Activated CD4-positive, alpha-beta memory T cell treated with anti-CD3 and anti-CD28 coated beads, Interleukin-2, amount 10 ng/mL, durations not matched to agents 7 days and 5 days (primary cell): ENCODE measurements at regions of chr1 and their contacts with region 1.

Region 1: GRCh38 chr1:89657886-89658285 is 25.0 kb downstream of the LRRC8C start:
- DNase-seq: no peak
- H3K4me3 Mint-ChIP-seq: peak overlapping the region; percentile 15
- H3K27ac Mint-ChIP-seq: peak overlapping the region; percentile 81
- H3K4me1 Mint-ChIP-seq: peaks cover 88% of the 10 kb centered on the region
- H3K27me3 Mint-ChIP-seq: no peaks in the 10 kb centered on the region

Region 2: GRCh38 chr1:89615676-89616598 is 41.9 kb before region 1 on chr1:
- CTCF ChIA-PET with region 1: interaction called, 3 read pairs
- POLR2A ChIA-PET with region 1: interaction called, 54 read pairs
- DNase-seq: no peak
- H3K4me3 Mint-ChIP-seq: no peak overlapping the region
- H3K27ac Mint-ChIP-seq: no peak overlapping the region
- H3K4me1 Mint-ChIP-seq: peaks cover 83% of the 10 kb centered on the region
- H3K27me3 Mint-ChIP-seq: no peaks in the 10 kb centered on the region

Region 3: DNA sequence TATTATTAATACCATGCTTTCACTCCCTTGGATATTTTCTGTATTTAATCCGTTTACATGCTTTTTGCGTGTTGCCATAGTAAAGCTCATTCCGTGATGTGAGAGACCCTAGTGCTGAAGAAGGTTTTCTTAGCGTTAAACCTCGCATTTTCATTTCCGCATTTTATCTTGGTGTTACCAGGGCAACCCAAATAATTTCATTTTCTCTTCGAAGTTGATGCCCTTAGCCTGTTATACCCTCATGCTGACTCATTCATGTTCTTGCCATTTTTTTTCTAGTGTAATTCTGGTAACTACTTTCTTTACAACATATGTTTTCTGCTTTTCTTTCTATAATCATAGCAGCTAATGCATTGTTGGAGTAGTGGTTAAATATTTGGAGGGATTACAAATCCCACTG is 12.3 kb after region 1 on chr1:
- CTCF ChIA-PET with region 1: interaction called, 8 read pairs
- POLR2A ChIA-PET with region 1: interaction called, 53 read pairs
- DNase-seq: no peak
- H3K4me3 Mint-ChIP-seq: peak overlapping the region; percentile 56
- H3K27ac Mint-ChIP-seq: peak overlapping the region; percentile 71
- H3K4me1 Mint-ChIP-seq: peaks cover 89% of the 10 kb centered on the region
- H3K27me3 Mint-ChIP-seq: no peaks in the 10 kb centered on the region

Region 4: GRCh38 chr1:89675677-89676076 is 17.8 kb after region 1 on chr1:
- CTCF ChIA-PET with region 1: interaction called, 8 read pairs
- POLR2A ChIA-PET with region 1: interaction called, 53 read pairs
- DNase-seq: no peak
- H3K4me3 Mint-ChIP-seq: no peak overlapping the region
- H3K27ac Mint-ChIP-seq: peak overlapping the region; percentile 33
- H3K4me1 Mint-ChIP-seq: peaks cover 73% of the 10 kb centered on the region
- H3K27me3 Mint-ChIP-seq: no peaks in the 10 kb centered on the region

Region 5: DNA sequence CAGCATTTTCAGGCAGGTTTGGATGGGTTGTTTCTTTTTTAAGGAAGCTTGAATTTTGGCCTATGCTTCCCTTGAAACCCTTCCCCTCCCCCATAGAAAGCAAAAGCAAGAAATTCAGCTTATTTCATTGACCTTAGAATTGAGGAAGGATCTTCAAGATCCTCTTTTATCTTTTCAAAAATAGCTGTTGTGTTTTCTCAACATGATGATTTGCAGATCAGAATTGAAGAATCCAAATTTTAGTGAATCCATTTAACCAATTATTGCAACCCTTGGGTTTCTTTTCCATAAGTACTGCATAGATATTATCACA is 48.8 kb after region 1 on chr1:
- CTCF ChIA-PET with region 1: no interaction called
- POLR2A ChIA-PET with region 1: no interaction called
- DNase-seq: no peak
- H3K4me3 Mint-ChIP-seq: no peak overlapping the region
- H3K27ac Mint-ChIP-seq: no peak overlapping the region
- H3K4me1 Mint-ChIP-seq: peaks cover 34% of the 10 kb centered on the region
- H3K27me3 Mint-ChIP-seq: no peaks in the 10 kb centered on the region

Region 6: DNA sequence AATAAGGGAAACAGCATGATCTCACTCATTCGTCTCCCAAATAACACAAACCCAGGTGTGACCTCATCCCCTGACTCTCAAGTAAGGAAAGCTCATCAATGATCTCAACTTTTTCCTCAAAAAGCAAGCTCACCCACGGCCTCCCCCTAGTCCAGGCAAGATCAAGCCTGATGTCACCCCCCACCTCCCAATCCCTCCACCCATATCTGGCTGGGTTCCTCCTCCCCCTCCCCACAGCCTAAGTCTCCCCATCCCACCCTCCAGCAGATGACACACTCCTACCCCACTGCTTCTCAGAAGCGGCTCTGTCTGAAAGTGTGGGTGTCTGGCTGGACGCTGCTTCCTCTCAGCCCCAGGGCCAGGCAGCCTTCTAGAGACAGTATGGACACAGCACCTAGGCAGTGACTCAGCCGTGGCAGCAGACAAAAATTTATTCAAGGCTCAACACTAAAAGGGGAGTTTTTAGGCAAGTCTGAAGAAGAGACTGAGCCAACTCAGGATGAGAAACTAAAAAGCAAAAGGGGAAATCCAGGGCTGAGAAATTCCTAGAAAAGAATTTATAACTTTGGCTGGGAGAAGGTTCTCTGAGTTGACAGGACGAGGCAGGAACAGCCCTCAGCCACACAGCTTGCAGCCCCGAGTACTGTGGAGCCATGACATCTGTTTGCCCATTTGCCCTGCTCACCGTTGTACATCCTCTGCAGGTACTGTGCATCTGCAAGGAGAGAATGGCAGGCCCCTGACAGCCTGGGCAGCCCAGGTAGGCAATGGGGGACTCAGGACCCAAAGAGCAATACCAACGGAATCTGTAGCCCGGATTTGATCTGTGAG is 81.3 kb after region 1 on chr1:
- CTCF ChIA-PET with region 1: no interaction called
- POLR2A ChIA-PET with region 1: no interaction called
- DNase-seq: peak; percentile 43
- H3K4me3 Mint-ChIP-seq: peak overlapping the region; percentile 29
- H3K27ac Mint-ChIP-seq: peak overlapping the region; percentile 65
- H3K4me1 Mint-ChIP-seq: peaks cover 38% of the 10 kb centered on the region
- H3K27me3 Mint-ChIP-seq: no peaks in the 10 kb centered on the region